ENCODE measurements at regions of chr13 and their contacts with region 1.

Region 1: GRCh38 chr13:112643759-112644459 is 45.9 kb upstream of the ATP11A start:
- DNase-seq: no peak
- ATAC-seq: no peak
- H3K4me3 ChIP-seq: no peak overlapping the region
- H3K27ac ChIP-seq: no peak overlapping the region
- H3K4me1 ChIP-seq: peaks cover 0 to 18% (median 0%) of the 10 kb centered on the region in 12 donors
- H3K27me3 ChIP-seq: peaks cover 0 to 16% (median 9%) of the 10 kb centered on the region in 9 donors
- CTCF ChIP-seq: no peak
- POLR2A ChIP-seq: no peak

Region 2: DNA sequence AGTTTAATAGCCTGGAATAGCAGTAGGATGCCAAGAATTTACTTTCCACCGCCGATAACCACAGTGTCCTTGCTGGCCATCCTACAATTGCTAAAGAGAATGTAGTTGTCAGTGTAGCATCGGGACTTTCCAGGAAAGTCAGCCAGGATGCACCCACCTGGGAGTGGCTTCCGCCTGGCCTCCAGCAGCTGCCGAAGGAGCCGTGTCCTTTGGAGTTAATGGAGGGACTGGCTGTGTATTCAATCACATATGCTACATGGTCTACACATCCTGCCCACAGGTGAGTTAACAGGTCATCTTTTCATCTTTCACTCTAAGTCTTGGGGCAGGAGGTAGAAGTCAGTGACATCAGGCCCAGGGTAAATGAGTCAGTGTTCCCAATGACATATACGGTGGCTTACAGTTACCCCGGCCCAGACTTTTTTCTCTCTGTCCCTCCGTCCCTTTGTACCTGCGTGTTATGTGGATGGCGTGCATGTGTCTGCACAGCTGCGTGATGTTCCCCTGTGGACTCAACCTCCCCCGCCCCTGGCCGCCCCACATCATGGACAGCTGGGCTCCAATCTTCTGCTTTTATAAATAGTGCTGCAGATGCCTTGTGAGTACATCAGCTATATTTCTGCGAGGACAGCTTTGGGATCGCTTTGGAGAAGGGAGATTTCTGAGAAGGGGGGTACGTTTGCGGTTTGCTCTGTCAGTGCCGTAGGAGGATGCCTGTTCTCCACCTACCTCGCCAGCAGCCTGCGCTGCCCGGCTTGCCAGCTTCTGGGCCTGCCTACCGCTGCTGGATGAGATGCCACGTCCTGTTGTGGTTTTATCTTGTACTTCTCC is 109.0 kb after region 1 on chr13:
- intact Hi-C with region 1: loop called in 1 of 10 experiments (anchors 10 kb)
- DNase-seq: no peak
- ATAC-seq: peak; percentile 21 to 45 (median 28)
- H3K4me3 ChIP-seq: no peak overlapping the region
- H3K27ac ChIP-seq: no peak overlapping the region
- H3K4me1 ChIP-seq: peaks cover 0 to 26% (median 10%) of the 10 kb centered on the region in 12 donors
- H3K27me3 ChIP-seq: no peaks in the 10 kb centered on the region
- CTCF ChIP-seq: no peak
- POLR2A ChIP-seq: no peak

Region 3: GRCh38 chr13:112821340-112822055 is 177.6 kb after region 1 on chr13:
- intact Hi-C with region 1: loop called in 1 of 10 experiments (anchors 5 kb)
- DNase-seq: peak in 1 of 5 donors; percentile 12
- ATAC-seq: peak in 2 of 4 donors; percentile 38 to 64
- H3K4me3 ChIP-seq: no peak overlapping the region
- H3K27ac ChIP-seq: peak overlapping the region in 1 of 12 donors; percentile 32
- H3K4me1 ChIP-seq: peaks cover 0 to 8% (median 0%) of the 10 kb centered on the region in 12 donors
- H3K27me3 ChIP-seq: no peaks in the 10 kb centered on the region
- CTCF ChIP-seq: no peak
- POLR2A ChIP-seq: no peak

Region 4: DNA sequence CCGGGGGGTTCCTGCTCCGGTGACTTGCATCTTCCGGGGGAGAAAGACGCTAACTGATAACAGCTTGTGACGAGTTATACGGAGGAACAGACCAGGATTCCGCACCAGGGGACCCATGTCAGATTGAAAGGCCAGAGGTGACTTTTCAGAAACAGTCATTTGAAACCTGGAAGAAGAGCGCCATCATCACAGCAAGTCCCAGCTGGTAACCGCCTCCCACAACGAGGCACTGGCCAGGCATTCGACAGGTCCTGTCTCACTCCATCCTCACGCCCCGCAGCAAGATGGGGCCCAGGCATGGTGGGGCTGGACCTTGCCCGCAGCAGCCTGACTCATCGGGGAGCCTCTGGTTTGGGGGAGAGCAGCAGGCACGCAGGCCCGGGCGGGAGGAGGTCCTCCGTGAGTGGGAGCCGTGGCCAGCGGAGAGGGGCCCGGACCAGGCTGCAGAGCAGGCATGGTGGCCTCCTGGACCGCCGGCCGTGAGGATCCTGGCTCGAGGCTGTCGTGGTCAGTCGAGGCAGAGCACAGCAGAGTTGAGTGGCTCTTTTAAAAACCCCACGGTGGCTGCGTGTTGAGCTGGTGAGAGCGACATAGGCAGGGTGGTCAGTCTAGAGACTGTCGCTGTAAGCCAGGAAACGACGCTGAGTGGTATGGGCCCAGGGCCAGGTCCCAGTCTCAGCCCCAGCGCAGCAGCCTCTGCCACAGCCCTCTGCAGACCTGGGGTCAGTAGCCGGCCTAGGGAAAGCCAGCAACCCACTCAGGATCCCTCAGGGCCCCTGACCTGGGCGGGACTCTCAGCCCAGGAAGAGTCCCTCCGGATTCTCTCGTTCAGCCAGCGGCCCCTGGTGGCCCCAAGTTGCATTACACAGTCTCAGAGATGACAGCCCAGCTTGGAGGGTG is 230.2 kb after region 1 on chr13:
- intact Hi-C with region 1: loop called in 9 of 10 experiments (anchors 1 to 10 kb)
- DNase-seq: peak; percentile 76 to 87 (median 78)
- ATAC-seq: peak; percentile 54 to 89 (median 84)
- H3K4me3 ChIP-seq: peak overlapping the region in 2 of 12 donors; percentile 21 to 32
- H3K27ac ChIP-seq: peak overlapping the region in 9 of 12 donors; percentile 6 to 55 (median 29)
- H3K4me1 ChIP-seq: peaks cover 0 to 15% (median 5%) of the 10 kb centered on the region in 12 donors
- H3K27me3 ChIP-seq: no peaks in the 10 kb centered on the region
- CTCF ChIP-seq: peak; percentile 90 to 97 (median 94)
- POLR2A ChIP-seq: no peak